CD8-positive, alpha-beta T cell (primary cell): ENCODE measurements at regions of chr20 and their contacts with region 1.

Region 1: DNA sequence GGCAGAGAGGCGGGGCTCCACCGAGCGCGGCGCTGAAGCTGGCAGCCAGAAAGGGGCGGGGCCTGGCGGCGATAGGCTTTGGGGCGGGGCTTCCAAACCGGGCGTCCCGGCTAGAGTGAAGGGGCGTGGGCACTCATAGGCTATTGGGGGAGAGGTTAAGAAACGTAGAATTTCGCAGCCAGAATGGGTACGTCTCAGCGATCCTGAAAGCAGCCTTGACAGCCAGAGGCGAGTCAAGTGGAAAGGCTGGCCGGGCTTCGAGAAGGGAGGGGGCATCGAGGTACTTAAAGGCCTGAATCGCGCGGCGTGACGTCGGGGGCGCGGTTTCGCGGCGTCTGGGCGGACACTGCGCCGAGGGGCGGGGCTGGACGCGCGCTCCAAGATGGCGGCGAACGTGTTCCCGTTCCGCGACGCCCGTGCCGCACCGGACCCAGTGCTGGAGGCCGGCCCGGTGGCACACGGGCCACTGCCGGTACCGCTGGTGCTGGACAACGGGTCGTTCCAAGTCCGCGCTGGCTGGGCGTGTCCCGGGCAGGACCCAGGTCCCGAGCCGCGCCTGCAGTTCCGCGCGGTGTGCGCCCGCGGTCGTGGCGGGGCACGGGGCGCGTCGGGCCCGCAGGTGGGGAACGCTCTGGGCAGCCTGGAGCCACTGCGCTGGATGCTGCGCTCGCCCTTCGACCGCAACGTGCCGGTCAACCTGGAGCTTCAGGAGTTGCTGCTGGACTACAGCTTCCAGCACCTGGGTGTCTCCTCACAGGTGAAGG is at the start of gene ACTR5:
- DNase-seq: peak; percentile 95 to 99 (median 97)
- ATAC-seq: peak; percentile 91
- H3K4me3 ChIP-seq: peak within 1 kb of the TSS; percentile 75 to 86
- H3K4me3 Mint-ChIP-seq: peak within 1 kb of the TSS; percentile 98
- H3K27ac ChIP-seq: peak within 1 kb of the TSS; percentile 81 to 98
- H3K27ac Mint-ChIP-seq: peak within 1 kb of the TSS; percentile 99
- H3K4me1 ChIP-seq: peaks cover 16% of the 10 kb centered on the region
- H3K4me1 Mint-ChIP-seq: peaks cover 23% of the 10 kb centered on the region
- H3K27me3 ChIP-seq: no peaks in the 10 kb centered on the region
- H3K27me3 Mint-ChIP-seq: peaks cover 6% of the 10 kb centered on the region
- CTCF ChIP-seq: no peak
- total RNA-seq, gene ACTR5: 15.7 to 18.2 TPM

Region 2: GRCh38 chr20:38550274-38550673 is 198.0 kb before region 1 on chr20:
- CTCF ChIA-PET with region 1: no interaction called
- POLR2A ChIA-PET with region 1: no interaction called
- intact Hi-C with region 1: loop called in 1 of 2 experiments (anchors 5 kb)
- DNase-seq: peak in 1 of 9 experiments; percentile 5
- ATAC-seq: peak; percentile 36
- H3K4me3 ChIP-seq: no peak overlapping the region
- H3K4me3 Mint-ChIP-seq: no peak overlapping the region
- H3K27ac ChIP-seq: no peak overlapping the region
- H3K27ac Mint-ChIP-seq: no peak overlapping the region
- H3K4me1 ChIP-seq: peaks cover 3% of the 10 kb centered on the region
- H3K4me1 Mint-ChIP-seq: peaks cover 12% of the 10 kb centered on the region
- H3K27me3 ChIP-seq: no peaks in the 10 kb centered on the region
- H3K27me3 Mint-ChIP-seq: no peaks in the 10 kb centered on the region
- CTCF ChIP-seq: no peak

Region 3: GRCh38 chr20:38730989-38731737 is 17.1 kb before region 1 on chr20:
- CTCF ChIA-PET with region 1: interaction called, 24 read pairs
- POLR2A ChIA-PET with region 1: interaction called, 6 read pairs
- intact Hi-C with region 1: loop called (anchors 1 kb)
- DNase-seq: peak; percentile 60 to 86 (median 76)
- ATAC-seq: peak; percentile 75
- H3K4me3 ChIP-seq: peak overlapping the region; percentile 46 to 65
- H3K4me3 Mint-ChIP-seq: peak overlapping the region; percentile 73
- H3K27ac ChIP-seq: no peak overlapping the region
- H3K27ac Mint-ChIP-seq: no peak overlapping the region
- H3K4me1 ChIP-seq: peaks cover 34% of the 10 kb centered on the region
- H3K4me1 Mint-ChIP-seq: peaks cover 48% of the 10 kb centered on the region
- H3K27me3 ChIP-seq: peaks cover 60 to 79% of the 10 kb centered on the region in 2 experiments
- H3K27me3 Mint-ChIP-seq: peaks cover 90% of the 10 kb centered on the region
- CTCF ChIP-seq: peak; percentile 97

Region 4: DNA sequence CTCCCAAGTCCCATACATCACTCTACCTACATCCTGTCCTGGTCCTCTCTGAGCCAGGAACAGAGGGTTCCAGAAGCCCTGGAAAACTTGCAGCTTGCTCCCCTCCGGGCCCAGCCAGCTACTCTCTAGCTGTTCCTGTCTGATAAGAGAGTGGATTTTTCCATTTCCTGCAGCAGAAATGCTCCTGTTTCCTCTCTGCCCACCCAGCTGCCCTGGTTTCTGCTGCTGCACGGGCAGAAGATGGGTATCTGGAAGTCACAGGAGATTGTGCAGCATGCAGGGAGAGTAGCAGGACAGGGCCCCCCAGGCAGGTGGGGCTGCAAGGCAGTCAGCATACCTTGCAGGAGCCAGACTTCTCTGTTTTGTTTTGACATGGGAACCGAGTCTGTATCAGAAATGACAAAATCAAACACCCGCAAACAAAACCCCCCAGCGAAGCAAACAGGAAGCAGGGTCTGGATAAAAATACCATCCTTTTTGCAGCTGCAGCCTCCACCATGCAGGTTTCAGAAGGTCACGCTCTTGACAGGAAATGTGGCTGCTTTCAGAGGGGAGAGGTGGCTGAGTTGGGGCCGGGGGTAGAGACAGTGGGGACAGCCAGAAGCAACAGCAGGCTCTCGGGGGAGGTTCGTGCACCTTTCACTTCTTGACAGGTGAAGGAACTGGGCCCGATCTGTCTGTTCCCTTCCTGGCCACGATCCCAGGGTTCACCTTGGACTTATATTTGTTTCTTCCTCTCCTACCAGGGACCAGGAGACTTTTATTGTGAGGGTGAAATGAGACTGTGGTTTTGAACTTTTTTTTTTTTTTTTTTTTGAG is 127.1 kb after region 1 on chr20:
- CTCF ChIA-PET with region 1: interaction called, 3 read pairs
- POLR2A ChIA-PET with region 1: interaction called, 3 read pairs
- intact Hi-C with region 1: loop called in 1 of 2 experiments (anchors 5 kb)
- DNase-seq: peak; percentile 53 to 93 (median 78)
- ATAC-seq: peak; percentile 51
- H3K4me3 ChIP-seq: peak overlapping the region; percentile 21 to 32
- H3K4me3 Mint-ChIP-seq: peak overlapping the region; percentile 82
- H3K27ac ChIP-seq: peak overlapping the region; percentile 61 to 87
- H3K27ac Mint-ChIP-seq: peak overlapping the region; percentile 98
- H3K4me1 ChIP-seq: peaks cover 59% of the 10 kb centered on the region
- H3K4me1 Mint-ChIP-seq: peaks cover 90% of the 10 kb centered on the region
- H3K27me3 ChIP-seq: no peaks in the 10 kb centered on the region
- H3K27me3 Mint-ChIP-seq: no peaks in the 10 kb centered on the region
- CTCF ChIP-seq: no peak

Region 5: DNA sequence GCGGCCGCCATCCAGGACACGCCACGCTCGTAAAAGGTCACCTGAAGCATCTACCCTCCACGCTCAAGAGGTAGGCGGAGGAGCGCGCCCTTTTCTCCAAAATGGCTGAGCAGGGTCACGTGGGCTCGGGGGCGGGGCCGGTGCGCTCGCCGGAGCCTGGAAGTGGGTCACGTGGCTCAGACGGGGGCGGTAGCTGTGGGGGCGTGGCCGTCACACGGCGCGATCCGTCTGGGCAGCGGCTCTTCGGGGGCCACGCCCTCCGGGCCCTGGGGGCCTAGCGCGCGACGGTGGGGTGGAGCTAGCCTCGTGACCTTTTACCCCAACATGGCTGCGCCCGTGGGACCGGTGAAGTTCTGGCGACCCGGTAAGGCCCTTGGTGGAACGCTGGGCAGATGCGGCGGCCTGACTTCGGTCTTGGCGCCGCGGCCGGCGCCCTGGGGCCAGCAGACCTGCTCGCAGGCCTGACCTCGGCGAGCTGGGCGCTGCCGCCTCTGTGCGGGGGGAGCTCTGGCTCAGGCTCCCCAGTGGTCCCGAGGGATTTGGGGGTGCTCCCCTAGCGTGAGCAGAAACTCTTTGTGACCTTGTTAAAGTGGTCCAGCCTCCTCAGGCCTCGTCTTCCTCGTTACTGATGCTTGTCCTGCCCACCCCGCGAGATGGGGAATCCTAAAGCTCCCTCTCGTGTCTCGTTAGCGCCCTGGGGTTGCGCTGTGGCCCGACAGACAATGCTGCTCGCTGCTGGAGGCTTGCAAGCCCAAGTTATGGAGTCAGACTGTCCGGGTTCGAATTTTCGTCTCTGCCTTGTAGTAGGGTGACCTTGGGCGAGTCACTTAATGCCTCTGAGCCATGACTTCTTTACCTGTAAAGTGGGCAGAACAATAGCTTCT is 214.0 kb after region 1 on chr20 and contains the start of gene DHX35:
- CTCF ChIA-PET with region 1: interaction called, 4 read pairs
- POLR2A ChIA-PET with region 1: interaction called, 7 read pairs
- intact Hi-C with region 1: loop called in 1 of 2 experiments (anchors 1 kb)
- DNase-seq: peak; percentile 96 to 100 (median 98)
- ATAC-seq: peak; percentile 99
- H3K4me3 ChIP-seq: peak within 1 kb of the TSS; percentile 83 to 97
- H3K4me3 Mint-ChIP-seq: peak within 1 kb of the TSS; percentile 94
- H3K27ac ChIP-seq: peak within 1 kb of the TSS; percentile 76 to 82
- H3K27ac Mint-ChIP-seq: peak within 1 kb of the TSS; percentile 97
- H3K4me1 ChIP-seq: peaks cover 19% of the 10 kb centered on the region
- H3K4me1 Mint-ChIP-seq: peaks cover 28% of the 10 kb centered on the region
- H3K27me3 ChIP-seq: no peaks in the 10 kb centered on the region
- H3K27me3 Mint-ChIP-seq: no peaks in the 10 kb centered on the region
- CTCF ChIP-seq: no peak
- total RNA-seq, gene DHX35: 8.5 to 8.8 TPM